Right ventricle myocardium inferior (tissue), 1 donor: ENCODE measurements at regions of chr11 and their contacts with region 1.

Region 1: GRCh38 chr11:43124272-43124935 is 187.4 kb upstream of the API5 start:
- DNase-seq: no peak
- ATAC-seq: no peak

Region 2: GRCh38 chr11:43034341-43034740 is 90.1 kb before region 1 on chr11:
- intact Hi-C with region 1: loop called (anchors 5 kb)
- DNase-seq: no peak
- ATAC-seq: no peak